Activated T-helper 1 cell treated with anti-CD3 and anti-CD28 coated beads, Interleukin-12 subunit alpha, Interleukin-12 subunit beta, Interleukin-2, Interleukin-4 antibody, amounts not matched to agents 30 ng/mL and 10 ng/mL and 1 ng/mL, durations not matched to agents 14 hours and 24 hours and 36 hours (primary cell): ENCODE measurements at regions of chr7 and their contacts with region 1.

Region 1: DNA sequence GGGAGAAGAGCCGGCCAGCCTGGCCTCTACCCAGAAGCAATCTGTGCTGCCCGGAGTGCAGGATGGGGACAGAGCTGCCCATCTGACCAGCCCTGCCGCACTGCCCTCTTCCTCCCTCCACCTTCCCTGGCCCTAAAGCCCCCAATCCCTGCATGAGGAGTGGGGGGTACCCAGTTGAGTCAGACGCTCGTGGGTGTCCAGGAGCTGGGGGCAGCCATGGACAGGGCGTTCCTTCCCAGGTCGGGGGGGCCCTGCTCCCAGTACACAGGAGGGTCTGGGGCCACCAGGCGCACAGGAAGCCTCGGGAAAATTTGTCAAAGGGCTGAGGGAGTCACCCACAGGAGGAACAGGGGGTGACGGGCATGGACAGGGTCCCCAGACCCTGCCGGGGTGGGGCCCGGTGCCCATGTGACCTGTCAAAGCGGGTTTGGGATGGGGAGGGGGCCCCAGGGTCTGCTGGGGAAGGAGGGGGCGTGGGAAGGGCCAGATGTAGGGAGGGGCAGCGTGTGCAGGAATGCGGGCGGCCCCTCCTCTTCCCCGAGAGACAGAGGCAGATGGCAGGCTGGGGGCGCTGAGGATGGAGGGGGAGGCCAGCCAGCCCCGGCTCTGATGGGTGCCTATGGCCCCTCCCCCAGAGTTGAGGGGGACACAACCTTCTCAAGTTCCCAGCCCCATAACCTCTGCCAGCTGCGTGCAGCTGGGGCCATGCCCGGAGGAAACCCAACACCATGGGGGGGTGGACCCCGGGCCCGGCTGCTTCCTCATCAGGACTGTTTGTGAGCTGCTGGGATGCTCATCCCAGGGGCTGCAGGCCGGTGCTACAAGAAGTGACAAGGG is 21.5 kb upstream of the GRIFIN start:
- DNase-seq: no peak
- H3K4me3 Mint-ChIP-seq: no peak overlapping the region
- H3K27ac Mint-ChIP-seq: no peak overlapping the region
- H3K4me1 Mint-ChIP-seq: no peaks in the 10 kb centered on the region
- H3K27me3 Mint-ChIP-seq: peaks cover 5% of the 10 kb centered on the region

Region 2: GRCh38 chr7:923108-924041 is 1574.3 kb before region 1 on chr7:
- intact Hi-C with region 1: no loop called
- DNase-seq: peak; percentile 89
- H3K4me3 Mint-ChIP-seq: peak overlapping the region; percentile 81
- H3K27ac Mint-ChIP-seq: peak overlapping the region; percentile 94
- H3K4me1 Mint-ChIP-seq: peaks cover 20% of the 10 kb centered on the region
- H3K27me3 Mint-ChIP-seq: peaks cover 4% of the 10 kb centered on the region

Region 3: DNA sequence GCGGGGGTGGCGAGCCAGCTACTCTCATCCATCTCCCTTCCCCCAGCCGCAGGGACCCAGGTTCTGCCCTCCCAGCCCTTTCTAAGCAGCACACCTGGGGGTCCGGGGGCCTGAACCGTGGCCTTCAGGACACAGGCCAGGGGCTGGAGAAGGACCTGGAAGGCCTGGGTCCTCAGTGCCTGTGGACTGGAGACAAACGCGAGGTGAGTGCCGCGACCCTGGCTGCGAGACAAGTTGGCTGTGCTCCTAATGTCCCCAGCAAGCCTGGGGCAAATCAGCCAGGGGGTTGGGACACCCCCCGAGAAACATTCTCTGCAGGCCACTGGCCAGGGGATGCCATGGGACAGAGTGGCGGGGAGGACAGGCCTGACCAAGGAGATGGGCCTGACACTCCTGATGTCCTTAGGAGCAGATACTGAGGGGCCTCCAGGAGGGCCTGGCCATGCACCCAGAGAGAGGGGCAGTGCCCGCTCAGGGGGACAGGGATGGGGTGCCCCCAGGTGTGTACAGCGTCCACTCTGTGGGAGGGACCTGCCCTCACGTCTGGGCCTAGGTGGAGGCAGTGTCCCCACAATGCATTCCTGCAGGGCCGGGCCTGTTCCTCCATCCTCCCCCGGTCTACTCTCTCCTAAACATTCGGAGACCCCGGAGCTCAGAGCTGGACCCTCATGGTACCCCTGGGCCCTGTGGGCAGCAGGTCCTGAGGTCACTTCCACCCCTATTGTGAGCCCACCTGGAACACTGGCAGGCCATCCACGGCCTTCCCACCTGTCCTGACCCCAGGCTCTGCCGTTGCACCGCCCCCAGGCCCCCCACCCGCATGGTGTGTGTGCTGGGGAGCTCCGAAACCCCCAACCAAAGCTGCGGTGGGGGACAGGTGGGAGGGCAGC is 44.6 kb after region 1 on chr7:
- intact Hi-C with region 1: loop called (anchors 1 kb)
- DNase-seq: no peak
- H3K4me3 Mint-ChIP-seq: no peak overlapping the region
- H3K27ac Mint-ChIP-seq: no peak overlapping the region
- H3K4me1 Mint-ChIP-seq: no peaks in the 10 kb centered on the region
- H3K27me3 Mint-ChIP-seq: no peaks in the 10 kb centered on the region